ENCODE measurements at regions of chrX and their contacts with region 1.

Region 1: GRCh38 chrX:84046403-84046984 is 141.5 kb downstream of the RPS6KA6 start:
- DNase-seq: peak; percentile 38
- ATAC-seq: peak; percentile 88
- H3K4me3 ChIP-seq: no peak overlapping the region
- H3K27ac ChIP-seq: no peak overlapping the region
- H3K4me1 ChIP-seq: no peaks in the 10 kb centered on the region
- H3K27me3 ChIP-seq: peaks cover 2% of the 10 kb centered on the region; the same call in 1 of the 2 replicates
- CTCF ChIP-seq: peak; percentile 72
- POLR2A ChIP-seq: no peak
- RAD21 ChIP-seq: peak; percentile 71

Region 2: DNA sequence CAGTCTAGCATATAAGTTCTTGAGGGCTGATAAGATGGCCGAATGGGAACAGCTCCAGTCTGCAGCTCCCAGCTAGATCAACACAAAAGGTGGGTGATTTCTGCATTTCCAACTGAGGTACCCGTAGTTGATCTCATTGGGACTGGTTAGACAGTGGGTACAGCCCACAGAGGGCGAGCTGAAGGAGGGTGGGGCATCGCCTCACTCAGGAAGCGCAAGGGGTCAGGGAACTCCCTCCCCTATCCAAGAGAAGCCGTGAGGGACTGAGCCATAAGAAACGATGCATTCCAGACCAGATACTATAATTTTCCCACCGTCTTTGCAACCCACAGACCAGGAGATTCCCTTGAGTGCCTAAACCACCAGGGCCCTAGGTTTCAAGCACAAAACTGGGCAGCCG is 32.5 kb after region 1 on chrX:
- CTCF ChIA-PET with region 1: no interaction called
- POLR2A ChIA-PET with region 1: no interaction called
- dilution Hi-C with region 1: no loop called
- in situ Hi-C with region 1: no loop called
- intact Hi-C with region 1: no loop called
- DNase-seq: no peak
- ATAC-seq: no peak
- H3K4me3 ChIP-seq: no peak overlapping the region
- H3K27ac ChIP-seq: no peak overlapping the region
- H3K4me1 ChIP-seq: no peaks in the 10 kb centered on the region
- H3K27me3 ChIP-seq: no peaks in the 10 kb centered on the region
- CTCF ChIP-seq: no peak
- POLR2A ChIP-seq: no peak
- RAD21 ChIP-seq: no peak

Region 3: GRCh38 chrX:84188320-84188834 is 141.9 kb after region 1 on chrX:
- CTCF ChIA-PET with region 1: interaction called, 3 read pairs
- POLR2A ChIA-PET with region 1: no interaction called
- dilution Hi-C with region 1: no loop called
- in situ Hi-C with region 1: no loop called
- intact Hi-C with region 1: loop called (anchors 1 kb)
- DNase-seq: peak; percentile 64
- ATAC-seq: peak; percentile 75
- H3K4me3 ChIP-seq: peak overlapping the region; percentile 68
- H3K27ac ChIP-seq: no peak overlapping the region
- H3K4me1 ChIP-seq: no peaks in the 10 kb centered on the region
- H3K27me3 ChIP-seq: no peaks in the 10 kb centered on the region
- CTCF ChIP-seq: 0 out of 2 replicates have a peak, but pooled peaks have one; percentile 5
- POLR2A ChIP-seq: no peak
- RAD21 ChIP-seq: 0 out of 2 replicates have a peak, but pooled peaks have one; percentile 8

Region 4: GRCh38 chrX:84501798-84502628 is 455.5 kb after region 1 on chrX and contains the start of gene HDX:
- CTCF ChIA-PET with region 1: no interaction called
- POLR2A ChIA-PET with region 1: no interaction called
- dilution Hi-C with region 1: no loop called
- in situ Hi-C with region 1: no loop called
- intact Hi-C with region 1: loop called (anchors 10 kb)
- DNase-seq: peak; percentile 81
- ATAC-seq: peak; percentile 99
- H3K4me3 ChIP-seq: peak within 1 kb of the TSS; percentile 58
- H3K27ac ChIP-seq: peak within 1 kb of the TSS; percentile 83
- H3K4me1 ChIP-seq: no peaks in the 10 kb centered on the region
- H3K27me3 ChIP-seq: no peaks in the 10 kb centered on the region
- CTCF ChIP-seq: no peak
- POLR2A ChIP-seq: peak; percentile 45; the same call in 1 of the 2 replicates
- RAD21 ChIP-seq: no peak
- total RNA-seq, gene HDX: 11.4 and 11.8 TPM in 2 replicates

Region 5: GRCh38 chrX:84907324-84907968 is 861.0 kb after region 1 on chrX:
- CTCF ChIA-PET with region 1: interaction called, 4 read pairs
- POLR2A ChIA-PET with region 1: no interaction called
- dilution Hi-C with region 1: no loop called
- in situ Hi-C with region 1: no loop called
- intact Hi-C with region 1: loop called (anchors 5 kb)
- DNase-seq: peak; percentile 5
- ATAC-seq: peak; percentile 49; the same call in 1 of the 2 replicates
- H3K4me3 ChIP-seq: no peak overlapping the region
- H3K27ac ChIP-seq: no peak overlapping the region
- H3K4me1 ChIP-seq: no peaks in the 10 kb centered on the region
- H3K27me3 ChIP-seq: no peaks in the 10 kb centered on the region
- CTCF ChIP-seq: peak; percentile 37
- POLR2A ChIP-seq: no peak
- RAD21 ChIP-seq: peak; percentile 26

Region 6: GRCh38 chrX:85052636-85053343 is 1006.3 kb after region 1 on chrX:
- CTCF ChIA-PET with region 1: no interaction called
- POLR2A ChIA-PET with region 1: no interaction called
- dilution Hi-C with region 1: no loop called
- in situ Hi-C with region 1: no loop called
- intact Hi-C with region 1: loop called (anchors 5 kb)
- DNase-seq: peak; percentile 86
- ATAC-seq: peak; percentile 81
- H3K4me3 ChIP-seq: no peak overlapping the region
- H3K27ac ChIP-seq: peak overlapping the region; percentile 49; the same call in 1 of the 2 replicates
- H3K4me1 ChIP-seq: no peaks in the 10 kb centered on the region
- H3K27me3 ChIP-seq: no peaks in the 10 kb centered on the region
- CTCF ChIP-seq: peak; percentile 53
- POLR2A ChIP-seq: no peak
- RAD21 ChIP-seq: peak; percentile 51